ENCODE measurements at regions of chr17 and their contacts with region 1.

Region 1: DNA sequence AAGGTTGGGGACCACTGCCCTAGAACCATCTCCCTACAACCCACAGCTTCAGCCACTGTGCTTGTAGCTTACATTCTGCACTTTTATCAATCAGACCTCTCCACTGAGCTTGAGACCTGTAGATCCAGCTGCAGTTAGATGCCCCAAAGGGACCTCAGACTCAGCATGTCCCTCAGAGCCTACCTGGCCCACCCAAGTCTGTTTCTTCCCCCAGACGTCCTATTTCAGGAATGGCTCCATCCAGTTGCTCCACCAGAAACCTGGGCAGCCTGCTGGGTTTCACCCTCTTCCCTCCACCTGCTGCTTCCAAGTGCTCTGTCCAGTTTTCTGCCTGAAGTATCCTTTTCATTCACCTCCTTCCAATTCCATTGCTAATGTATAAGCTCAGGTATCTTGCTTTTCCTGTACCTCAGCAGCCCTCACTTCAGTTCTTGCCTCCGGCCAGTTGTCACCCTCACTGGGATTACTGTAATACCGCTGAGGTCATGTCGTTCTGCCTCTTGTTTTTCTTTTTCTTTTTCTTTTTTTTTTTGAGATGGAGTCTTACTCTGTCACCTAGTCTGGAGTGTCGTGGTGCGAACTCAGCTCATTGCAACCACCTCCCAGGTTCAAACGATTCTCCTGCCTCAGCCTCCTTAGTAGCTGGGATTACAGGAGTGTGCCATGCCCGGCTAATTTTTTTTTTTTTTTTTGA is 55.0 kb downstream of the GNA13 start:
- DNase-seq: no peak
- ATAC-seq: no peak
- H3K4me3 ChIP-seq: no peak overlapping the region
- H3K27ac ChIP-seq: no peak overlapping the region
- H3K4me1 ChIP-seq: peaks cover 17% of the 10 kb centered on the region
- H3K27me3 ChIP-seq: no peaks in the 10 kb centered on the region
- CTCF ChIP-seq: no peak
- EP300 ChIP-seq: no peak
- POLR2A ChIP-seq: no peak
- RAD21 ChIP-seq: no peak

Region 2: GRCh38 chr17:65074778-65075250 is 73.3 kb after region 1 on chr17:
- CTCF ChIA-PET with region 1: no interaction called
- POLR2A ChIA-PET with region 1: no interaction called
- in situ Hi-C with region 1: no loop called
- intact Hi-C with region 1: no loop called
- DNase-seq: peak; percentile 60
- ATAC-seq: peak; percentile 74
- H3K4me3 ChIP-seq: peak overlapping the region; percentile 4 to 24 (median 11); a peak in 4 of 6 replicates
- H3K27ac ChIP-seq: no peak overlapping the region
- H3K4me1 ChIP-seq: peaks cover 37% of the 10 kb centered on the region
- H3K27me3 ChIP-seq: no peaks in the 10 kb centered on the region
- CTCF ChIP-seq: peak; percentile 34; the same call in 1 of the 2 replicates
- EP300 ChIP-seq: 0 out of 4 replicates have a peak, but pooled peaks of 1 of the 2 experiments have one; percentile 15
- POLR2A ChIP-seq: no peak
- RAD21 ChIP-seq: no peak

Region 3: GRCh38 chr17:65093930-65094329 is 92.4 kb after region 1 on chr17:
- CTCF ChIA-PET with region 1: no interaction called
- POLR2A ChIA-PET with region 1: no interaction called
- in situ Hi-C with region 1: no loop called
- intact Hi-C with region 1: no loop called
- DNase-seq: no peak
- ATAC-seq: peak; percentile 43; the same call in 2 of the 3 replicates
- H3K4me3 ChIP-seq: no peak overlapping the region
- H3K27ac ChIP-seq: no peak overlapping the region
- H3K4me1 ChIP-seq: no peaks in the 10 kb centered on the region
- H3K27me3 ChIP-seq: 0 out of 5 replicates have a peak, but pooled peaks cover 0 to 3% of the 10 kb centered on the region in 2 experiments
- CTCF ChIP-seq: no peak
- EP300 ChIP-seq: no peak
- POLR2A ChIP-seq: no peak
- RAD21 ChIP-seq: no peak

Region 4: DNA sequence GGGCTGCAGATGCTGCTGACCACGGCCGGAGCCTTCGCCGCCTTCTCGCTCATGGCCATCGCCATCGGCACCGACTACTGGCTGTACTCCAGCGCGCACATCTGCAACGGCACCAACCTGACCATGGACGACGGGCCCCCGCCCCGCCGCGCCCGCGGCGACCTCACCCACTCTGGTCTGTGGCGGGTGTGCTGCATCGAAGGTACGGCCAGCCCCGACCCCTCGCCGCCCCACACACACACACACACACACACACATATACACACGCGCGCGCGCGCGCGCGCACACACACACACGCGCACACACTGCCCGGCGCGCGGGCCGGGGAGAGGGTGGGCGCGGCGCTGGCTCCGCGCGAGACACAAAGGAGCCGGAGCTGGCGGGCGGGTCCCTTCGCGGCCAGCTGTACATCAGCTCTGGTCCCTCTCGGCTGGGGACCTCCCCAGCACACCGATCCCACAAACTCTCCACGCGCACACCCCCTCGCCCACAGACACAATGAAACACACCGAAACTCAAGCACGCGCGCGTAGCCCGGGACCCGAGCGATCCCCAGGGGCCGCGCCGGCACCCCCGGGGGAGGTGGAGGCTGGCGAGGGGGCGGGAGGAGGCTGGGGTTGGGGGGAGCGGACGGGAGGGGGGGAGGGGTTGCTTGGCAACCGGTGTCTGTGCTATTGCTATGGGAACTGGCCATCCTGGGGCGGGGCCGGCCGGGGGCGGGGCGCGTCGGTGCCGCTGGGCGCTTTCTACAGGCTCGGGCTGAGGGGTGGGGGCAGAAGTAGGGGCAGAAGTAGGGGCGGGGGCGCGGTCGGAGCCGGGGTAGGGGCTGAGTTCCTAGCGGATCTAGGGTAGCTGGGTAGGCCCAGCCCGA is 1963.6 kb after region 1 on chr17:
- CTCF ChIA-PET with region 1: no interaction called
- POLR2A ChIA-PET with region 1: no interaction called
- in situ Hi-C with region 1: no loop called
- intact Hi-C with region 1: loop called (anchors 5 kb)
- DNase-seq: no peak
- ATAC-seq: peak; percentile 34
- H3K4me3 ChIP-seq: peak overlapping the region; percentile 27 to 66 (median 35); a peak in 4 of 6 replicates
- H3K27ac ChIP-seq: no peak overlapping the region
- H3K4me1 ChIP-seq: peaks cover 8% of the 10 kb centered on the region; the same call in 1 of the 2 replicates
- H3K27me3 ChIP-seq: peaks cover 9 to 73% of the 10 kb centered on the region in 2 experiments; a peak in 4 of 5 replicates
- CTCF ChIP-seq: no peak
- EP300 ChIP-seq: no peak
- POLR2A ChIP-seq: no peak
- RAD21 ChIP-seq: no peak